ENCODE measurements at regions of chr3 and their contacts with region 1.

Region 1: DNA sequence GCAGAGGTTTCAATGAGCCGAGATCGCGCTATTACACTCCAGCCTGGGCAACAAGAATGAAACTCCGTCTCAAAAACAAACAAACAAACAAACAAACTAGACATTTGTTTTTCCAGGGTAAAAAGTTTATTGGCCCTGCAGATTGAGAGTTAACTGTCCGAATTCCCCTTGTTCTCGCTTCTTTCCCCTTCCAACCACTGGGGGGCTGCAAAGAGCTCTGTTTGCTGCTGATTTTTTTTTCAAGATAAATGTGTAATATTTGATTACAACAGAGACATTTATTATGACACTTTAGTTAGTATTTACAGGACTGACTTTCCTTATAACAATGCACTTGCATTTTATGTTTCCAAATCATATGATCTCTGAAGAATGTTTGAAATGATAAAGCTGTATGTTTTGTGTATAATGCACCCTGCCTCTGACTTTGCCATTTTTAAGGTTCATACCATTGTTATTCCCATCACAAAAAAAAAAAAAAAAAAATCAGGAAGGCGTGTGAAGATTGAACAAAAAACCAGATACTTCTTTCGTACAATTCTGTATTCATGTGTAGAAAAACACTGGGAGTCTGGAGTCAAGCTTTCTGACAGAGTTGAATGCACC is 2.8 kb downstream of the CLSTN2 start:
- H3K4me3 ChIP-seq: no peak overlapping the region
- H3K27ac ChIP-seq: no peak overlapping the region
- H3K4me1 ChIP-seq: no peaks in the 10 kb centered on the region
- CTCF ChIP-seq: no peak

Region 2: GRCh38 chr3:139948898-139949297 is 11.1 kb after region 1 on chr3:
- CTCF ChIA-PET with region 1: interaction called, 11 read pairs
- POLR2A ChIA-PET with region 1: no interaction called
- H3K4me3 ChIP-seq: no peak overlapping the region
- H3K27ac ChIP-seq: no peak overlapping the region
- H3K4me1 ChIP-seq: no peaks in the 10 kb centered on the region
- CTCF ChIP-seq: no peak

Region 3: GRCh38 chr3:140051019-140051957 is 113.5 kb after region 1 on chr3:
- CTCF ChIA-PET with region 1: interaction called, 11 read pairs
- POLR2A ChIA-PET with region 1: interaction called, 4 read pairs
- H3K4me3 ChIP-seq: no peak overlapping the region
- H3K27ac ChIP-seq: no peak overlapping the region
- H3K4me1 ChIP-seq: no peaks in the 10 kb centered on the region; the same call in 1 of the 2 replicates
- CTCF ChIP-seq: peak; percentile 42; the same call in 1 of the 2 replicates

Measured in HEK293 (cell line).